Common myeloid progenitor, CD34-positive (primary cell): ENCODE measurements at regions of chr1 and their contacts with region 1.

Region 1: DNA sequence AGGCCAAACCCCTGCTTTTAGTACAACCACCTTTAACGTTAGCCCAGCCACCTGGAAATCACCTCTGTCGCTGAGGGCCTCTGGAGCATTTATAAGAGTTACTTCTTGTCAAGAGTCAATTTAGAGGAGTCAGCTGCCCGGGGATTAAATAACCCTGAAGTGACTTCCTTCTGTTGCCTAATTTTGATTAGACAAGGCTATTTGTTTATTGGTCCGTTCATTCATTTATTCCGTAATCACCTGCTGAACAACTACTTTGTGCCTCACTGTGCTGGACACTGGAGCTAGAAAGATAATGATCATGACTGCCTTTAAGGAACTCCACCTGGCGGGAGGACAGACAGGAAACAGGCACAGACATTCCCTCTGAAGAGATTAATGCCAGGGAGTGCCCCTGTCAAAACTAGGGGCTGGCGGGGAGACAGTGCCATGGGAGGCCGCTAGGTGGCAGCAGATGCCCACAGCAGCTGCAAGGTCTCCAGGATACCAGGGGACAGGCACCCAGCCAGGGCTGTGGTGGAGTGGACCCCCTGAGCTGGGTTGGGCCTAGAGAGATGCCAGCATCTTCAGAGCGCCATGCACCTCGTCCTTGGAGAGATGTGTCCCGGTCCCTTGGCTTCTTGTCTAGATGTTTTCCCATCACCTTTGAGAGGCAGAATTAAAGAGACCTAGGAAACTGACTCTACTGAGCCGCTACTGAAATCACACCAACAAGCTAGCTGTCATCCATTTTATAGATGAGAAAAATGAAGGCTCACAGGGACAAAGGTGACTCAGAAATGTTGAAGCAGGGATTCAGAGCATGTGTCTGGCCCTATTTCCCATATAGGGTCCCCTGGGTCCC is 3.7 kb downstream of the REN start:
- DNase-seq: peak; percentile 67 to 82 (median 75)
- H3K4me3 ChIP-seq: no peak overlapping the region
- H3K27ac ChIP-seq: no peak overlapping the region
- H3K4me1 ChIP-seq: peaks cover 2 to 20% (median 18%) of the 10 kb centered on the region in 4 experiments
- H3K27me3 ChIP-seq: no peaks in the 10 kb centered on the region

Region 2: DNA sequence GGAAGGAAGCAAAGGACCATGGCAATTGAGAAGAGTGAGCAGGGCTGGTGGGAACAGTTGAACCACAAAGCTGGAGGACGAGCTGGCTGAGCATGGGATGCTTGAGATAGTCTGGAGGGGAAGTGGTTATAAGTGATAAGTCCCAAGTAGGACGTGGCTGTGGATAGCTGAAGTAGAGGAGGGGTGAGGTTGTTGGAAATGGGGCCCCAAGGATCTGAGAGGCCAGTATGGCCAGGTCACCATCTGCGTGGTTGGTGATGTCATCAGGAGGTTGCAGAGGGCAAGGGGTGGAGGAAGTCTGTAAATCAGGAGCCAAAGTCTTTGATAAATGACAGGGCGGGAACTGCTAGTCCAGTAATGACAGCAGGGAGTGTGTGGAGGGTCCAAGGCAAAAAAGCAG is 14.7 kb after region 1 on chr1:
- CTCF ChIA-PET with region 1: interaction called, 108 read pairs
- POLR2A ChIA-PET with region 1: interaction called, 4 read pairs
- DNase-seq: peak; percentile 49 to 68 (median 56)
- H3K4me3 ChIP-seq: no peak overlapping the region
- H3K27ac ChIP-seq: no peak overlapping the region
- H3K4me1 ChIP-seq: peaks cover 0 to 32% (median 26%) of the 10 kb centered on the region in 4 experiments
- H3K27me3 ChIP-seq: no peaks in the 10 kb centered on the region

Region 3: DNA sequence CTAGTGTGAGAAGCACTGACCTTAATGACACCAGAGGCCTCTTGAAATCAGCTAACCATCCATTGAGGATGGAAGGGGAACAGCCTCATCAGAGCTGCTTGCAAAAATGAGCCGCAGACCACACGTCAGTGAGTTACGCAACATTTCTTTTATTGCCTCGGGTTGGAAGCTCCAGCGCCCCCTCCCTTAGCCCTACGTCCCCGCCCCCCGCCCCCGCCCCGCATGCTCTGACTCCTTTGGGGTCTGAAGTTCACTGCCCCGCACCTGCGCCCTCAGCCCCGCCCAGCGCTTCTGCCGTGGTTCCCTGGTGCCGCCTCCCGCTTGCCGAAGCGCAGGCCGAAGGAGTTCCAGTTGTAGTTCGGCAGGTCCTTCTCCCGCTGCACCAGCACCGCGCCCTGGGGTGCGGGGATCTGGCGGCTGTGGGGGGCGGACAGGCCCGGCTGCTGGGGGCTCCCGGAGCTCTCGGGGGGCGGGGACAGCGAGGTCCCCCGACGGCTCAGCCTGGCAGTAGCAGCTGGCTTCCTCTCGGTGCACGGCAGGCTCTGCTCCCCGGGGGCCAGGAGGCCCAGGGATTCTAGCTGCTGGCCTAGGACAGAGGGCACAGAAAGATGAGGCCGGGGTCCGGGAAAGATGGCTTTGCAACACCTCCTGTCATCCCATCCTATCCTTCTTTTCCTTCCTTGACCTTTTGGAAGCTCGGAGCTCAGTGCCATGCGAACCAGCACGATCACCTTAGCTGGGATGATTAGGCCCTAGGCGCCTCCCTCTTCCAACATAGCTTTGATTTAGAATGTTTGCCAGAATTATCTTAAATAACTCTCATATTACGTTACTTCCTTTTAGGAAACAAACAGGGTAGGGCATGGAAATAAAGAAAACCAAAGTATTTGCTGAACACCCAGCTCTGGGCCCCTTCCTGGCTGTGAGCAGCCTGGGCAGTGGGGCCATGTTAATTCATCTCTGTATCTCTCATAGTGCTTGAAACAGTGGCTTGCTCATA is 28.1 kb after region 1 on chr1:
- CTCF ChIA-PET with region 1: interaction called, 180 read pairs
- POLR2A ChIA-PET with region 1: no interaction called
- DNase-seq: peak; percentile 89 to 96 (median 92)
- H3K4me3 ChIP-seq: peak overlapping the region in 6 of 7 experiments; percentile 4 to 68 (median 32)
- H3K27ac ChIP-seq: no peak overlapping the region
- H3K4me1 ChIP-seq: peaks cover 6 to 50% (median 32%) of the 10 kb centered on the region in 4 experiments
- H3K27me3 ChIP-seq: no peaks in the 10 kb centered on the region

Region 4: GRCh38 chr1:204198151-204198994 is 35.9 kb after region 1 on chr1:
- CTCF ChIA-PET with region 1: interaction called, 265 read pairs
- POLR2A ChIA-PET with region 1: no interaction called
- DNase-seq: peak in 2 of 3 donors; percentile 31 to 41
- H3K4me3 ChIP-seq: no peak overlapping the region
- H3K27ac ChIP-seq: no peak overlapping the region
- H3K4me1 ChIP-seq: peaks cover 0 to 18% (median 10%) of the 10 kb centered on the region in 4 experiments
- H3K27me3 ChIP-seq: no peaks in the 10 kb centered on the region

Region 5: GRCh38 chr1:204207136-204207616 is 44.7 kb after region 1 on chr1:
- CTCF ChIA-PET with region 1: interaction called, 265 read pairs
- POLR2A ChIA-PET with region 1: interaction called, 4 read pairs
- DNase-seq: peak; percentile 50 to 63 (median 58)
- H3K4me3 ChIP-seq: no peak overlapping the region
- H3K27ac ChIP-seq: no peak overlapping the region
- H3K4me1 ChIP-seq: peaks cover 0 to 6% (median 0%) of the 10 kb centered on the region in 4 experiments
- H3K27me3 ChIP-seq: no peaks in the 10 kb centered on the region

Region 6: DNA sequence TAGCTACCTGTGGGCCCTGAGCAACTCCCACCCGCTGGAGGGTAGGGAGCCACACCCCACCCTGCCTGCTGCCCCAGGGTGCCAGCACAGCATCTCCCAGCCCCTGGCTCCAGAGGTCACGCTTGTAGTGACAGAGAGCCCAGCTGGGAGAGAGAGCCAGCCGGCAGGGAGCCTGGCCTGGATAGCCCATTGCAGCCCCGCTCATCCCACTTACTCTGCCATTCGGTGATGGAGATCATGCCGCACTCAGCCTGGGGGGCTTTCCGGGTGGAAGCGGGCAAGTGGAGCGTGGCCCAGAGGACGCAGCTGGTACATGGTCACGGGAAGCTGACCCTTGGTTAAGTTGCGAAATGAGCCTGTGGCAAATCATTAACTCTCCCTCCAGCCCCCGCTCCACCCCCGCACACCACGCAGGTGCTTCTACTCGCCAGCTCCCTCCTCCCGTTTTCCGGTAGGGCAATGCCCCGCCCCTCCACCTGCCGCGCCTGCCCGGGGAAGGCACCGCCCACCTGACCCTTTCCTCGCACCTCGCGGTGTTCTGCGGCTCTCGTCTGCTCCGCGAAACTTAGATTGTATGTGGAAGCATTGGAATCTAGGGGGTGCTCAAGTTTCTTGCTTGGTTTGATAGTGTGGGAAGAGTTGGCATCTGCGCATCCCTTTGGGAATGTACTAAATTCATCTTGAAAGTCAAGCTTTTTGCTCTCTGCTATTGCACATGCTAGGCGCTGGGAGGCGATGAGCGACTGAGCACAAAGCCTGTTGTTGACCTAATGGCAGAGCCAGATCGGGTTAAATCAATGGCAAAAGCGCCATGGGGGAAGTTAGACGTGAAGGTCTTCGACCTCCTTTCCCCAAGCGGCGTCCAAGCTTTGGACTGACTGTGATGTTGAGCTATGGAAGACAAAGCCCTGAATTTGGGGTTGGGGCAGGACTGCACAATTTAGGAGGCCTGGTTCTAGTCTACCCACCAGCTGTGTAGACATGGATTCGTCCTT is 51.5 kb after region 1 on chr1 and contains the start of gene GOLT1A:
- CTCF ChIA-PET with region 1: interaction called, 52 read pairs
- POLR2A ChIA-PET with region 1: no interaction called
- DNase-seq: peak; percentile 61 to 74 (median 70)
- H3K4me3 ChIP-seq: peak within 1 kb of the TSS; percentile 13 to 75 (median 35)
- H3K27ac ChIP-seq: no peak within 1 kb of the TSS
- H3K4me1 ChIP-seq: peaks cover 0 to 19% (median 16%) of the 10 kb centered on the region in 4 experiments
- H3K27me3 ChIP-seq: no peaks in the 10 kb centered on the region

Region 7: GRCh38 chr1:204398217-204399081 is 236.0 kb after region 1 on chr1:
- CTCF ChIA-PET with region 1: interaction called, 17 read pairs
- POLR2A ChIA-PET with region 1: no interaction called
- DNase-seq: peak; percentile 89 to 90 (median 90)
- H3K4me3 ChIP-seq: no peak overlapping the region
- H3K27ac ChIP-seq: no peak overlapping the region
- H3K4me1 ChIP-seq: peaks cover 0 to 2% (median 0%) of the 10 kb centered on the region in 4 experiments
- H3K27me3 ChIP-seq: no peaks in the 10 kb centered on the region